ENCODE measurements at regions of chr11 and their contacts with region 1.

Region 1: GRCh38 chr11:57493507-57494503 is 21.7 kb downstream of the SLC43A1 start:
- DNase-seq: peak; percentile 78
- H3K4me3 ChIP-seq: no peak overlapping the region; a peak in 1 of 4 replicates
- H3K27ac ChIP-seq: no peak overlapping the region
- H3K4me1 ChIP-seq: peaks cover 0 to 3% of the 10 kb centered on the region in 2 experiments; a peak in 1 of 4 replicates
- H3K27me3 ChIP-seq: no peaks in the 10 kb centered on the region
- CTCF ChIP-seq: peak; percentile 90
- EP300 ChIP-seq: no peak
- RAD21 ChIP-seq: peak; percentile 71

Region 2: GRCh38 chr11:57378186-57378585 is 115.6 kb before region 1 on chr11:
- CTCF ChIA-PET with region 1: no interaction called
- POLR2A ChIA-PET with region 1: no interaction called
- DNase-seq: no peak
- H3K4me3 ChIP-seq: no peak overlapping the region
- H3K27ac ChIP-seq: no peak overlapping the region
- H3K4me1 ChIP-seq: no peaks in the 10 kb centered on the region; a peak in 1 of 4 replicates
- H3K27me3 ChIP-seq: no peaks in the 10 kb centered on the region
- CTCF ChIP-seq: no peak
- EP300 ChIP-seq: no peak
- RAD21 ChIP-seq: no peak

Region 3: GRCh38 chr11:57474017-57474802 is 19.6 kb before region 1 on chr11:
- CTCF ChIA-PET with region 1: interaction called, 29 read pairs
- POLR2A ChIA-PET with region 1: no interaction called
- DNase-seq: peak; percentile 37
- H3K4me3 ChIP-seq: no peak overlapping the region
- H3K27ac ChIP-seq: no peak overlapping the region
- H3K4me1 ChIP-seq: peaks cover 0 to 8% of the 10 kb centered on the region in 2 experiments; a peak in 1 of 4 replicates
- H3K27me3 ChIP-seq: 0 out of 2 replicates have a peak, but pooled peaks cover 4% of the 10 kb centered on the region
- CTCF ChIP-seq: no peak
- EP300 ChIP-seq: no peak
- RAD21 ChIP-seq: no peak

Region 4: GRCh38 chr11:57515332-57516060 is 21.7 kb after region 1 on chr11 and contains the start of gene SLC43A1:
- CTCF ChIA-PET with region 1: interaction called, 63 read pairs
- POLR2A ChIA-PET with region 1: interaction called, 5 read pairs
- DNase-seq: peak; percentile 74
- H3K4me3 ChIP-seq: peak within 1 kb of the TSS; percentile 69 to 78
- H3K27ac ChIP-seq: no peak within 1 kb of the TSS; a peak in 1 of 4 replicates
- H3K4me1 ChIP-seq: peaks cover 0 to 9% of the 10 kb centered on the region in 2 experiments; a peak in 1 of 4 replicates
- H3K27me3 ChIP-seq: no peaks in the 10 kb centered on the region
- CTCF ChIP-seq: no peak
- EP300 ChIP-seq: no peak
- RAD21 ChIP-seq: no peak
- polyA plus RNA-seq, gene SLC43A1: 3.7 and 4.4 TPM in 2 replicates

Region 5: GRCh38 chr11:57530596-57531507 is 37.0 kb after region 1 on chr11 and contains the start of gene TIMM10:
- CTCF ChIA-PET with region 1: interaction called, 517 read pairs
- POLR2A ChIA-PET with region 1: interaction called, 12 read pairs
- DNase-seq: peak; percentile 88
- H3K4me3 ChIP-seq: peak within 1 kb of the TSS; percentile 83 to 95
- H3K27ac ChIP-seq: peak within 1 kb of the TSS; percentile 11 to 71; a peak in 3 of 4 replicates
- H3K4me1 ChIP-seq: peaks cover 0 to 9% of the 10 kb centered on the region in 2 experiments; a peak in 2 of 4 replicates
- H3K27me3 ChIP-seq: no peaks in the 10 kb centered on the region
- CTCF ChIP-seq: no peak
- EP300 ChIP-seq: peak in 1 of 2 experiments; percentile 33; a peak in 1 of 4 replicates
- RAD21 ChIP-seq: 0 out of 2 replicates have a peak, but pooled peaks have one; percentile 9
- polyA plus RNA-seq, gene TIMM10: 179 and 189 TPM in 2 replicates

Measured in SK-N-SH (cell line).